Activated T-helper 2 cell treated with anti-CD3 and anti-CD28 coated beads, Interferon-gamma antibody, Interleukin-2, Interleukin-4, amounts not matched to agents 10 μg/mL and 5 μg/mL and 100 μg/mL, durations not matched to agents 14 hours and 24 hours and 36 hours (primary cell): ENCODE measurements at regions of chr1 and their contacts with region 1.

Region 1: DNA sequence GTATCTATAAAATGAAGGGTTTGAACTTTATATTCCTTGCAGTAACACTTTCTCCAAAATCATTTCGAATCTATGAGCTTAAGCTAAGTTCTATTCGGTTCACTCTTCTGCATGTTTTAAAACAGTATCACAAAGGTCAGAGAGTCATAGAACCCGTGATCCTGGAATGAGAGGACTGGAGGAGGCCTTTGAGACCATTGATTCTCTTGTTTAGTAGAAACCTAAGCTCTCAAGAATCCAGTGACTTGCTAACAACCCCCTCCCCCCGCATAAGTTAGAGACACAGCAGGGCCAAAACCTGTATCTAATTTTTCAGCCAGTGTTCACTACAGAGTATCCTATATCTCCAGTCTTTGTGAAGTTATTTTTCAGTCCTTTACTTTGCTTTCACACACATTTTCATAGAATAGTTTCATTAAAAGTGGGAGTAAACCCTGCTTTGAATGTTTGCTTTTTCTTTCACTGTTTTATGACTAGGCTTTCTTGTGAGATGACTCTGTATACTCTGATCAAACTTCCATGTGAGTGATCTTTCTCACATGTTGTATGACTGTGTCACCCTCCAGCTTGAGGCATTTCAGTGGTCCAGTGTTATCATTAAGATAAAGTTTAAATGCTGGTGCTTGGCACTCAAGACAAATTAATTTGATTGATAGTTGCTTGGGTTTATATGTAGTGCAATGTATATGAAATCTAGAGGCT is 275.4 kb upstream of the SGIP1 start:
- DNase-seq: no peak
- H3K4me3 Mint-ChIP-seq: no peak overlapping the region
- H3K27ac Mint-ChIP-seq: no peak overlapping the region
- H3K4me1 Mint-ChIP-seq: peaks cover 52% of the 10 kb centered on the region
- H3K27me3 Mint-ChIP-seq: peaks cover 7% of the 10 kb centered on the region

Region 2: DNA sequence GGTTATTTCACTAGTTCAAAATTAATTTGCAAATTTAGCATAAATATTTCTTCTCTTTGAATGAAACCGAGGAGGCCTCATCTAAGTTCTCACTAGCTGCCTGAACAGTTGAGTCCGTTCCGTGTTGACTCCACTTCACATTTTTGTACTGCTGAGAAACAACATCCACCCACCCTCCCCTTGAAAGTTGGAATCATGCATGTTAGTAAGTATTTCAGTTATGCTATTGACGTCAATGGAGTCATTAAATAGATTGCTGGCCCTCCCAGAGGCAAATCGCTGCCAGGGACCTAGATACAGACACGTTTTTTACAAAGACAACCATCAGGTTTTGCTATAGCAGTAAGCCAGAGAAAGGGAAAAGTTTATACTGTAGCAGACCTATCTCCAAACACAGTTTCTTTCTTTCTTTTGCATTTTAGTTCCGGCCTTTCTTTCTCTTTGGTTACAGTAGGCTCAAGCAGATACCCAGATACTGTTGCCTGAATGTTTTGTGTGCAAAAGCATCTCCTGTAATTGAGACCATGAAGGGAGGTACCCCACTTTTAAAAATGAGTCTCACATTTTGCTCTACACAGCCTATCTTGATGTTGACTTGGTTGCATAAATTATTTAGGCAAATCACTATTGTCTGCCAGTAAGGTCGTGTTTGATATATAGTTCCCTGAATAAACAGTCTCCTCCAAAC is 12.8 kb after region 1 on chr1:
- intact Hi-C with region 1: loop called (anchors 1 kb)
- DNase-seq: no peak
- H3K4me3 Mint-ChIP-seq: no peak overlapping the region
- H3K27ac Mint-ChIP-seq: peak overlapping the region; percentile 44
- H3K4me1 Mint-ChIP-seq: peaks cover 62% of the 10 kb centered on the region
- H3K27me3 Mint-ChIP-seq: peaks cover 21% of the 10 kb centered on the region

Region 3: DNA sequence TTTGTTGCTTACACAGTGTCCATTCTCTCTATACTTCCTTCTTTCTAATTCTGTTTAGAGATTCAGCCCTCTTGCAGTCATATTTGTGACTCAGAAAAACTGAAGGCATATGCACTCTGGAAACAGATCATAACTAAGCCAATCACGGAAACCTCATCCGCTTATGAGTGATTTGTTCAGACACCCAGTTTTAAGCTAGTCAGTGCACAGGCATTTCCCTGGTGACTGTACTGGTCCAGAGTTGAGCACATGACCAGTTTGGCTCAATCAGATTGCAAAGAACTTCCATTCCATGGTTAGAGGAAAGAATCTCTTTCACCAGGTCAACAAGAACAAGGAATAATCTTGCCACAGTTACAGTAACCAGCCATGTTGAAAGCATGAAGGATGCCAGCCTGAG is 206.2 kb after region 1 on chr1:
- intact Hi-C with region 1: no loop called
- DNase-seq: no peak
- H3K4me3 Mint-ChIP-seq: no peak overlapping the region
- H3K27ac Mint-ChIP-seq: no peak overlapping the region
- H3K4me1 Mint-ChIP-seq: no peaks in the 10 kb centered on the region
- H3K27me3 Mint-ChIP-seq: peaks cover 11% of the 10 kb centered on the region